Activated CD4-positive, alpha-beta T cell treated with anti-CD3 and anti-CD28 coated beads, Interleukin-2, amount 10 ng/mL, durations not matched to agents 24 days and 14 days (primary cell): ENCODE measurements at regions of chr10 and their contacts with region 1.

Region 1: GRCh38 chr10:50636618-50637579 is 13.1 kb upstream of the SGMS1 start:
- DNase-seq: peak; percentile 83
- H3K4me3 Mint-ChIP-seq: peak overlapping the region; percentile 65
- H3K27ac Mint-ChIP-seq: peak overlapping the region; percentile 73
- H3K4me1 Mint-ChIP-seq: peaks cover 30% of the 10 kb centered on the region
- H3K27me3 Mint-ChIP-seq: peaks cover 60% of the 10 kb centered on the region

Region 2: GRCh38 chr10:50260791-50261281 is 376.1 kb before region 1 on chr10:
- intact Hi-C with region 1: loop called (anchors 5 kb)
- DNase-seq: peak; percentile 65
- H3K4me3 Mint-ChIP-seq: no peak overlapping the region
- H3K27ac Mint-ChIP-seq: no peak overlapping the region
- H3K4me1 Mint-ChIP-seq: peaks cover 15% of the 10 kb centered on the region
- H3K27me3 Mint-ChIP-seq: peaks cover 39% of the 10 kb centered on the region

Region 3: GRCh38 chr10:50648089-50648934 is 11.4 kb after region 1 on chr10:
- intact Hi-C with region 1: no loop called
- DNase-seq: no peak
- H3K4me3 Mint-ChIP-seq: no peak overlapping the region
- H3K27ac Mint-ChIP-seq: no peak overlapping the region
- H3K4me1 Mint-ChIP-seq: peaks cover 5% of the 10 kb centered on the region
- H3K27me3 Mint-ChIP-seq: peaks cover 13% of the 10 kb centered on the region

Region 4: GRCh38 chr10:50679149-50679548 is 42.2 kb after region 1 on chr10:
- intact Hi-C with region 1: no loop called
- DNase-seq: no peak
- H3K4me3 Mint-ChIP-seq: no peak overlapping the region
- H3K27ac Mint-ChIP-seq: no peak overlapping the region
- H3K4me1 Mint-ChIP-seq: no peaks in the 10 kb centered on the region
- H3K27me3 Mint-ChIP-seq: no peaks in the 10 kb centered on the region

Region 5: DNA sequence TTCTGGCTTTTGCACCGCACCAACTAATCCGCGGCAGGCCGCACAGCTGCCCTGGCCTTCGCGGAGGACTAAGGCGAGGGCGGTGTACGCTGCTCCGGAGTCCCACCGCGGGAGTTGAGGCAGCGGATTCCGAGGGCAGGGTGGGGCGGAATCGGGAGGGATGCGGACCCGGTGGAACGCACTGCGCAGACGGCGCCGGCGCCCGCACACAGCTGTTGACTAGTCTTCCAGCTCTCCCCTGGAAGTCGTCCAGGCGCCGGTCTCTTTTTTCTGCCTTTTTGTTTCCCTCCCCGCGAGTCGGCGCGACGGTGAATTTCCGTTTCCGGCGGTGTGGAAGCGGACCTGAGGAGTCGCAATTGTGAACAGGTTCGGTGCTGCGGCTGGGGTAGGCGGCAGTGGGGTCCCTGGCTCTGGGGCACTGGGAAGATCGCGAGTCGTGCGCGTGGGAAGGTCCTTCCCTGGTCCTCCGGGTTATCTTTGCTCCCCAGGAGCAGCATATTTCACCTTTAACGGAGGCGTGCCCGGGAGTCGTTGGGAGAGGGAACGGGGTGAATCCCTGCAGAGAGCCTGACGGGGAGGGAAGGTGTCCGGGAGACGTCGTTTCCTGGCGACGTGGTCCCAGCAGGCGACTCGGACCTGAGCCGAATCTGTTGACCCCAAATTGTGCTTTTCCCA is 102.9 kb after region 1 on chr10 and contains the start of gene ASAH2B:
- intact Hi-C with region 1: loop called (anchors 10 kb)
- DNase-seq: peak; percentile 92
- H3K4me3 Mint-ChIP-seq: peak within 1 kb of the TSS; percentile 90
- H3K27ac Mint-ChIP-seq: peak within 1 kb of the TSS; percentile 84
- H3K4me1 Mint-ChIP-seq: peaks cover 12% of the 10 kb centered on the region
- H3K27me3 Mint-ChIP-seq: peaks cover 18% of the 10 kb centered on the region
- total RNA-seq, gene ASAH2B: 2.7 and 4.5 TPM in 2 replicates